ENCODE measurements at regions of chr17 and their contacts with region 1.

Region 1: GRCh38 chr17:39863918-39864746 is at the start of gene IKZF3:
- DNase-seq: peak; percentile 79
- H3K4me3 Mint-ChIP-seq: peak within 1 kb of the TSS; percentile 91
- H3K27ac Mint-ChIP-seq: peak within 1 kb of the TSS; percentile 73
- H3K4me1 Mint-ChIP-seq: peaks cover 63% of the 10 kb centered on the region
- H3K27me3 Mint-ChIP-seq: peaks cover 5% of the 10 kb centered on the region
- total RNA-seq, gene IKZF3: 22.8 and 25.1 TPM in 2 replicates

Region 2: GRCh38 chr17:39636927-39637736 is 227.0 kb before region 1 on chr17 and contains the start of gene STARD3:
- intact Hi-C with region 1: loop called (anchors 5 kb)
- DNase-seq: peak; percentile 88
- H3K4me3 Mint-ChIP-seq: peak within 1 kb of the TSS; percentile 94
- H3K27ac Mint-ChIP-seq: peak within 1 kb of the TSS; percentile 85
- H3K4me1 Mint-ChIP-seq: peaks cover 34% of the 10 kb centered on the region
- H3K27me3 Mint-ChIP-seq: peaks cover 2% of the 10 kb centered on the region
- total RNA-seq, gene STARD3: 54.7 and 65.3 TPM in 2 replicates

Region 3: DNA sequence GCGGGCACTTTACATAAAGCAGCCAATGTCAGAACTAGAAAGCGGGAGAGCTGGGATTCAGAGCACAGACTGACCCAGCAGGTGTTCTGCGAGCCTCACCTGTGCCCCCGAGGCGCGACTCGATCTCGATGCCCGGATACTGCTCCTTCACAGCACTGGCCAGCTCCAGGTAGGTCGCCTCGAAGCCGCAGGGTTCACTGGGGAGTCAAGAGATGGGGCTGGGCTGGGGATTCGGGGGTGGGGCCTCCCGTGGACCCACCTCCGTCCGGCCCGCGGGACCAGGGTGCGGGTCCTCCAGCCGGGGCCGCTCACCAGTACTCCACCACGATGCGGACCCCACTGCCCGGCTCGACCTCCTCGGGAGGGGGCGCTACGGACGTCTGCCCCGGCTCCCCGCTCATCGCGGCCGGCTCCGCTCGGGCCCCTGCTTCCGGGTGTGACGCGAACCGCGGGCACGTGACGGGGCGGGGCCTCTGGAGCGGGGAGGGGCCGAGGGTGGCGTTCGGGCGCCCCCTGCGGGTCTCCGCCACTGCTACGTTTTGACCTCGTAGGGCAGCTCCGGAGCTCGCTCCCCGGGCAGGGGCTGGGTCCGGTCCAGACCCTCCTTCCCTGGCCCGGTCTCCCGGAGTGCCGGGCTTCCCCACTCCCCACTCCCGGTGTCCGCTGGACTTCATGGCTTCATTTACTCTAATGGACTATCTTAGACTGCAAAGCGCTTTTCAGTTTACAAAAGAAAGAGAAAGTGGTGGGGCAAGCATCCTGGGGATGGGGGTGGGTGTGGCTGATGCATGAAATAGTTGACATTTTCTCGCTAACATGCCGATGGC is 133.8 kb before region 1 on chr17 and contains the start of gene MIEN1:
- intact Hi-C with region 1: loop called (anchors 1 kb)
- DNase-seq: peak; percentile 90
- H3K4me3 Mint-ChIP-seq: peak within 1 kb of the TSS; percentile 92
- H3K27ac Mint-ChIP-seq: peak within 1 kb of the TSS; percentile 85
- H3K4me1 Mint-ChIP-seq: peaks cover 11% of the 10 kb centered on the region
- H3K27me3 Mint-ChIP-seq: peaks cover 7% of the 10 kb centered on the region
- total RNA-seq, gene MIEN1: 33.3 and 37.1 TPM in 2 replicates

Region 4: DNA sequence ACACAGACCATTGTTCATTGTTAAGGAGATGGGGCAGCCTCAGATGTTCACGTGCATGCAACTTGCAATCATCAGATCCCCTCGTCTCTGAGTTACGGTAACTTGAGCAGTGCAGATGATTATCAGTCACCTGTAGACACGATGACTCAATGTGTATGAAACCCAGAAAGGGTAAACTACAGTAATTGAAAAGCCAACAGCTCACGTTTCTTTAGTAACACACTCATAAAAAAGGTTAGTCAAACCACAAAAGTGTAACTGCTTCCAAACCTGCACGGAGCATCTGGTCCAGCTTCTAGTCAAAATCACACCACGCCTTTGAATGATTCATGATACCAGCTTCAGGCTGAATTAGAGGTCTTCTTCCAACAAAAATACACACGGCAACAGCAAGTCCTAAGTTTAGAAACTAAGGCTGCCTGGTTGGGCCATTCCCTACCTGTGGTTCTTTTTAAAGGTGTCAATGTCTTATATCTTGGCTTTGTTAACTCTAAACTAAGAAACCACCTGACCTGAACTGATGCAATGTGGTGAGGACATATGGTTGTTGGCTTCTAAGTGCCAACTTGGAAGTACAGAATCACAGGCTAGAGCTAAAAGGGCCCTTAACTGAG is 94.1 kb before region 1 on chr17:
- intact Hi-C with region 1: loop called (anchors 1 kb)
- DNase-seq: peak; percentile 63
- H3K4me3 Mint-ChIP-seq: peak overlapping the region; percentile 38
- H3K27ac Mint-ChIP-seq: peak overlapping the region; percentile 56
- H3K4me1 Mint-ChIP-seq: peaks cover 93% of the 10 kb centered on the region
- H3K27me3 Mint-ChIP-seq: no peaks in the 10 kb centered on the region

Region 5: DNA sequence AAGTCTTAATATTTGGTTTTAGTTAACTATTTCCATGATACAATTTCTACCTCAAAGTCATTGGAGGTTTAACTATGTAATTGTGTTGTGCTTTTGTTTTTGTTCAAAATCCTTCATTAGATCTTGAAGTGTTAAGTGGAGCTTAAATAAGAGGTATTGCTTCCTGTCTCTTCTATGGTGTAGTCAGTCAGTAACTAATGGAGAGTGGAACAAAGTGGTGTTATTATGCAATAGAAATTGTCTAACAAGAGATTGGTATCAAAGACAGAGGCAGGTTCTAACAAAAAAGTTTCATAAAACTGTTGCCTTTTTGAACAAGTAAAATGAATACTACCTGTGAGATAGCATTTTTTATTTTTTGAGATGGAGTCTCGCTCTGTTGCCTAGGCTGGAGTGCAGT is 81.2 kb before region 1 on chr17:
- intact Hi-C with region 1: no loop called
- DNase-seq: no peak
- H3K4me3 Mint-ChIP-seq: no peak overlapping the region
- H3K27ac Mint-ChIP-seq: no peak overlapping the region
- H3K4me1 Mint-ChIP-seq: peaks cover 34% of the 10 kb centered on the region
- H3K27me3 Mint-ChIP-seq: no peaks in the 10 kb centered on the region

Region 6: GRCh38 chr17:39822051-39822451 is 42.1 kb before region 1 on chr17:
- intact Hi-C with region 1: loop called (anchors 2 kb)
- DNase-seq: no peak
- H3K4me3 Mint-ChIP-seq: no peak overlapping the region
- H3K27ac Mint-ChIP-seq: peak overlapping the region; percentile 47
- H3K4me1 Mint-ChIP-seq: peaks cover 45% of the 10 kb centered on the region
- H3K27me3 Mint-ChIP-seq: no peaks in the 10 kb centered on the region

Region 7: DNA sequence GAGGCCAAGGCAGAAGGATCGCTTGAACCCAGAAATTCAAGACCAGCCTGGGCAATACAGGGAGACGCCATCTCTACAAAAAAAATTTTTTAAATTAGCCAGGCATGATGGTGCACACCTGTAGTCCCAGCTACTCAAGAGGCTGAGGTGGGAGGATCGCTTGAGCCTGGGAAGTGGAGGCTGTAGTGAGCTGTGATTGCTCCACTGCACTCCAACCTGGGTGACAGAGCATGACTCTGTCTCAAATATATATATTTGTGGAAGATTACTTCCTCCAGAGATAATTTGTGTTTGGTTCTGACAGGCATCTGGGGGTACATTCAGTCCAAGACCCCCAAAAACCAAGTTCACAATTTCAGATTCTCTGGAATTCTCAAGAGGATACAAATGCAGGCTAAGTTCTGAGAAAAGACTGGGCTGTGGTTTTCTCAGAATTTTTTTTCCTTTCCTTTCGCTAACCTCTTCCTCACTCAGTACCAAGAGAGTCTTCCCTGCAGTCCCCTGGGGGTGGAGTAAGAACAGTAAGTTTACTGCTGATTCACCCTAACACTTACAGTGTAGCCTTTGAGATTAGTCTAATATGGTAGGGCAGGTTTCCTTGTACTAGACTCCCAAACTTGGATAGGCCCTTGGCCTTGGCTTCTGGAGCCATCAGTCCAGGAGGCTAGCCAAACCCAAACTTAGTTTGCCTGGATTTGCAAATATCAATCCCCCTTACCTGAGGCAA is 39.2 kb after region 1 on chr17:
- intact Hi-C with region 1: loop called (anchors 5 kb)
- DNase-seq: peak; percentile 40
- H3K4me3 Mint-ChIP-seq: peak overlapping the region; percentile 62
- H3K27ac Mint-ChIP-seq: peak overlapping the region; percentile 55
- H3K4me1 Mint-ChIP-seq: peaks cover 49% of the 10 kb centered on the region
- H3K27me3 Mint-ChIP-seq: no peaks in the 10 kb centered on the region

Region 8: GRCh38 chr17:40098846-40099618 is 234.9 kb after region 1 on chr17:
- intact Hi-C with region 1: loop called (anchors 5 kb)
- DNase-seq: peak; percentile 86
- H3K4me3 Mint-ChIP-seq: peak overlapping the region; percentile 92
- H3K27ac Mint-ChIP-seq: peak overlapping the region; percentile 85
- H3K4me1 Mint-ChIP-seq: peaks cover 81% of the 10 kb centered on the region
- H3K27me3 Mint-ChIP-seq: peaks cover 11% of the 10 kb centered on the region